ENCODE measurements at regions of chr4 and their contacts with region 1.

Region 1: GRCh38 chr4:83110223-83110945 is 4.1 kb downstream of the PLAC8 start:
- DNase-seq: peak; percentile 95
- H3K4me3 Mint-ChIP-seq: peak overlapping the region; percentile 88
- H3K27ac Mint-ChIP-seq: peak overlapping the region; percentile 98
- H3K4me1 Mint-ChIP-seq: peaks cover 41% of the 10 kb centered on the region
- H3K27me3 Mint-ChIP-seq: no peaks in the 10 kb centered on the region

Region 2: GRCh38 chr4:82373816-82374625 is 736.4 kb before region 1 on chr4 and contains the start of gene HNRNPD:
- CTCF ChIA-PET with region 1: no interaction called
- intact Hi-C with region 1: loop called (anchors 2 kb)
- DNase-seq: peak; percentile 96
- H3K4me3 Mint-ChIP-seq: peak within 1 kb of the TSS; percentile 95
- H3K27ac Mint-ChIP-seq: peak within 1 kb of the TSS; percentile 95
- H3K4me1 Mint-ChIP-seq: peaks cover 33% of the 10 kb centered on the region
- H3K27me3 Mint-ChIP-seq: no peaks in the 10 kb centered on the region
- total RNA-seq, gene HNRNPD: 340 to 367 TPM

Region 3: GRCh38 chr4:83012687-83013419 is 97.5 kb before region 1 on chr4:
- CTCF ChIA-PET with region 1: interaction called, 3 read pairs
- intact Hi-C with region 1: loop called (anchors 1 kb)
- DNase-seq: peak; percentile 98
- H3K4me3 Mint-ChIP-seq: peak overlapping the region; percentile 95
- H3K27ac Mint-ChIP-seq: peak overlapping the region; percentile 87
- H3K4me1 Mint-ChIP-seq: peaks cover 29% of the 10 kb centered on the region
- H3K27me3 Mint-ChIP-seq: no peaks in the 10 kb centered on the region

Region 4: DNA sequence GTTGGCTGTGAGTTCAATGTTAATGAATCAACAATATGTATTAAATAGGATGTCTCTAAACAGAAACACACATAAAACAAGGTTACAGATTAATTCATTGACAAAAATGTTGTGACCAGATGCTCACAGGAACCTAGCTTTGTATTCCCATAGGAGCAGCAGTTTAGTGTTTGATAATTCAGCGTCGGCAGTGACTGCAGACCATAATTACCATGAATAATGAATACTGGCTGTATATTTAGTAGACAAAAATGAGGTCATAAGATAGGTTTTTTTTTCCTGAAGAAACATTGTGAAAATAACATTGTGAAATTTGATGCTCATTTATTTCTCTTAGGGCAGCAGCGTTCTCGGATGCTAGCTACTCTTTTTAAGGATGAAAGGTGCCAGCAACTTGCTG is 47.6 kb before region 1 on chr4:
- CTCF ChIA-PET with region 1: no interaction called
- intact Hi-C with region 1: no loop called
- DNase-seq: no peak
- H3K4me3 Mint-ChIP-seq: no peak overlapping the region
- H3K27ac Mint-ChIP-seq: no peak overlapping the region
- H3K4me1 Mint-ChIP-seq: no peaks in the 10 kb centered on the region
- H3K27me3 Mint-ChIP-seq: no peaks in the 10 kb centered on the region

Region 5: GRCh38 chr4:83150653-83151330 is 40.4 kb after region 1 on chr4:
- CTCF ChIA-PET with region 1: interaction called, 6 read pairs
- intact Hi-C with region 1: loop called (anchors 1 kb)
- DNase-seq: no peak
- H3K4me3 Mint-ChIP-seq: no peak overlapping the region
- H3K27ac Mint-ChIP-seq: no peak overlapping the region
- H3K4me1 Mint-ChIP-seq: peaks cover 28% of the 10 kb centered on the region
- H3K27me3 Mint-ChIP-seq: no peaks in the 10 kb centered on the region

Region 6: DNA sequence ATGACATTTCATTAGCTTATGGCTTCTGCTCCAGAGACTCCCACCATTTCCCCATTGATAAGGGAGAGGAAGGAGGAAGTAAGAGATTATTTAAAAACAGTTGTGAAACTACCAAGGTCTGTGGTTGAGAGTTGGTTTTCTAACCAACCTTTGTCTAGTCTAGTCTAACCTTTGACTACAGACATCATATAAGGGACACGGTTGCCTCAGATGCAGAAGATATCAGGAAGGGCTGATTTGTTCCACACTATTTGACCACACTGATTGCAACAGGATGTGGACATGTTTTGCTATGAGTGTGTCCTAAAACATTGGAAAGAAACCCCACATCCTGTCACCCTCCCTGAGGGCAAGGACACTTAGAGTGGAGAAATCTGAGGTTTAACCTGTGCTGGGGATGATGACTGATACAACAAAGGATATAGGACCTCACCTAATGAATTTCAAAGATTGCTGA is 121.3 kb after region 1 on chr4:
- CTCF ChIA-PET with region 1: interaction called, 4 read pairs
- intact Hi-C with region 1: loop called (anchors 1 kb)
- DNase-seq: peak; percentile 68
- H3K4me3 Mint-ChIP-seq: no peak overlapping the region
- H3K27ac Mint-ChIP-seq: peak overlapping the region; percentile 16
- H3K4me1 Mint-ChIP-seq: peaks cover 46% of the 10 kb centered on the region
- H3K27me3 Mint-ChIP-seq: peaks cover 3% of the 10 kb centered on the region

Region 7: GRCh38 chr4:83356899-83357661 is 246.7 kb after region 1 on chr4:
- CTCF ChIA-PET with region 1: no interaction called
- intact Hi-C with region 1: loop called (anchors 1 kb)
- DNase-seq: peak; percentile 63
- H3K4me3 Mint-ChIP-seq: no peak overlapping the region
- H3K27ac Mint-ChIP-seq: peak overlapping the region; percentile 62
- H3K4me1 Mint-ChIP-seq: peaks cover 15% of the 10 kb centered on the region
- H3K27me3 Mint-ChIP-seq: no peaks in the 10 kb centered on the region